Activated B cell treated with CpG ODN at 0.5 μM for 24 hours (primary cell): ENCODE measurements at regions of chr14 and their contacts with region 1.

Region 1: DNA sequence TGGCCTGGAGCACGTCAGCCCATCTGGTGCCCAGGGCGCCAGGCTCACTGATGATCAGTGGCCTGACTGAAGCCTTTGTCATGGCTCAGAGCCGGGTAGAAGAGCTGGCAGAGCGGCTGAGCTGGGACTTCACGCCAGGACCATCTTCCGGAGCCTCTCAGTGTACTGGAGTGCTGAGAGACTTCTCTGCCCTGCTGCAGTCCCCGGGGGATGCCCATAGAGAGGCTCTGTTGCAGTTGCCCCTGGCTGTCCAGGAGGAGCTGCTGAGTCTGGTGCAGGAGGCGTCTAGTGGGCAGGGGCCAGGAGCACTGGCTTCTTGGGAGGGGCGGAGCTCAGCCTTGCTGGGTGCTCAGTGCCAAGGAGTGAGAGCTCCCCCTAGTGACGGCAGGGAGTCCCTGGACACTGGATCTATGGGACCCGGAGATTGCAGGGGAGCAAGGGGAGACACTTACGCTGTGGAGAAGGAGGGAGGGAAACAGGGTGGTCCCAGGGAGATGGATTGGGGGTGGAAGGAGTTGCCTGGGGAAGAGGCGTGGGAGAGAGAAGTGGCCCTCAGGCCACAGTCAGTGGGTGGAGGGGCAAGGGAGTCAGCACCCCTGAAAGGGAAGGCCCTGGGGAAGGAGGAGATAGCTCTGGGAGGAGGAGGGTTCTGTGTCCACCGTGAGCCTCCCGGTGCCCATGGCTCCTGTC is 2.0 kb downstream of the KHNYN start:
- DNase-seq: peak; percentile 73
- ATAC-seq: peak; percentile 41
- H3K4me3 Mint-ChIP-seq: peak overlapping the region; percentile 93
- H3K27ac Mint-ChIP-seq: peak overlapping the region; percentile 97
- H3K4me1 Mint-ChIP-seq: peaks cover 53% of the 10 kb centered on the region
- H3K27me3 Mint-ChIP-seq: no peaks in the 10 kb centered on the region
- CTCF ChIP-seq: peak; percentile 49

Region 2: GRCh38 chr14:24013654-24014514 is 417.8 kb before region 1 on chr14:
- CTCF ChIA-PET with region 1: no interaction called
- POLR2A ChIA-PET with region 1: no interaction called
- intact Hi-C with region 1: loop called (anchors 1 kb)
- DNase-seq: no peak
- ATAC-seq: peak; percentile 97
- H3K4me3 Mint-ChIP-seq: no peak overlapping the region
- H3K27ac Mint-ChIP-seq: no peak overlapping the region
- H3K4me1 Mint-ChIP-seq: peaks cover 20% of the 10 kb centered on the region
- H3K27me3 Mint-ChIP-seq: no peaks in the 10 kb centered on the region
- CTCF ChIP-seq: peak; percentile 48

Region 3: DNA sequence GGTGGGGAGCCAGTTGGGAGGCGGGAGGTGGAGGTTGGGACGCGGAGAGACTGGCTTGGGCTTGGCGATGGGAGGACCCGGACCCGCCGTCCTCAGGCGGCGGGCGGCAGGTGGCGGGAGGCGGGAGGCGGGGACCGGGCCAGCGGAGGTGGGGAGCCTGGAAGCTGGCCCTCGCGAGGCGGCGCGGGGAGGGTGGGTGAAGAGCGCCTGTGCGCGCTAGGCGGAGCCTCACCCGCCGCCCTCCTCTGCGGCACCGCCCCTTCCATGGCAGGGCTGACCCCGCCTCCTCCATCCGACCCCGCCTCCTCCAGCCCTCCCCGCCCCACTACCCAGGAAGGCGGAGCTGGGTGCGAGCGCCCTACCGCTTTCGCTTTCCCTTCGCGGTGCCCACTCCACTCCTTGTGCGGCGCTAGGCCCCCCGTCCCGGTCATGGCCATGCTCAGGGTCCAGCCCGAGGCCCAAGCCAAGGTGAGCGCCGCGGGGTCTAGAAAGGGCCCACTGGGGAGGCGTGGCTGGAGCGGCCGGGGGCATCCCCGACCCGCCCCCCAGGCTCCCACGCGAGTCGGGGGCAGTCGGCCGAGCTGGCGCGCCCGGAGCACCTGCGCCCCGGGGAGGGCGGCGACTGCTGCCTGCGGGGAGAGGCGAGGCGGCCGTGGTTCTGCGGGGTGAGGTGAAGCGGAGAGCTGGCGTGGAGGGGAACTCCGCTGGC is 295.7 kb before region 1 on chr14 and contains the start of gene PSME1:
- CTCF ChIA-PET with region 1: no interaction called
- POLR2A ChIA-PET with region 1: interaction called, 5 read pairs
- intact Hi-C with region 1: loop called (anchors 1 kb)
- DNase-seq: peak; percentile 94
- ATAC-seq: peak; percentile 97
- H3K4me3 Mint-ChIP-seq: peak within 1 kb of the TSS; percentile 91
- H3K27ac Mint-ChIP-seq: peak within 1 kb of the TSS; percentile 90
- H3K4me1 Mint-ChIP-seq: peaks cover 57% of the 10 kb centered on the region
- H3K27me3 Mint-ChIP-seq: no peaks in the 10 kb centered on the region
- CTCF ChIP-seq: no peak
- total RNA-seq, gene PSME1: 406 and 449 TPM in 2 replicates

Region 4: GRCh38 chr14:24215495-24216344 is 216.0 kb before region 1 on chr14 and contains the start of gene MDP1:
- CTCF ChIA-PET with region 1: interaction called, 5 read pairs
- POLR2A ChIA-PET with region 1: interaction called, 25 read pairs
- intact Hi-C with region 1: loop called (anchors 1 kb)
- DNase-seq: peak; percentile 71
- ATAC-seq: peak; percentile 75
- H3K4me3 Mint-ChIP-seq: peak within 1 kb of the TSS; percentile 93
- H3K27ac Mint-ChIP-seq: peak within 1 kb of the TSS; percentile 95
- H3K4me1 Mint-ChIP-seq: peaks cover 50% of the 10 kb centered on the region
- H3K27me3 Mint-ChIP-seq: no peaks in the 10 kb centered on the region
- CTCF ChIP-seq: no peak
- total RNA-seq, gene MDP1: 12.7 and 16.3 TPM in 2 replicates

Region 5: GRCh38 chr14:24299255-24300195 is 132.2 kb before region 1 on chr14 and contains the starts of genes DHRS1 and NOP9:
- CTCF ChIA-PET with region 1: interaction called, 5 read pairs
- POLR2A ChIA-PET with region 1: interaction called, 28 read pairs
- intact Hi-C with region 1: loop called (anchors 1 kb)
- DNase-seq: peak; percentile 93
- ATAC-seq: peak; percentile 78
- H3K4me3 Mint-ChIP-seq: peak within 1 kb of the TSS; percentile 95
- H3K27ac Mint-ChIP-seq: peak within 1 kb of the TSS; percentile 94
- H3K4me1 Mint-ChIP-seq: peaks cover 51% of the 10 kb centered on the region
- H3K27me3 Mint-ChIP-seq: no peaks in the 10 kb centered on the region
- CTCF ChIP-seq: no peak
- total RNA-seq, gene DHRS1: 32.5 and 33.9 TPM in 2 replicates
- total RNA-seq, gene NOP9: 30.5 and 36.4 TPM in 2 replicates

Region 6: DNA sequence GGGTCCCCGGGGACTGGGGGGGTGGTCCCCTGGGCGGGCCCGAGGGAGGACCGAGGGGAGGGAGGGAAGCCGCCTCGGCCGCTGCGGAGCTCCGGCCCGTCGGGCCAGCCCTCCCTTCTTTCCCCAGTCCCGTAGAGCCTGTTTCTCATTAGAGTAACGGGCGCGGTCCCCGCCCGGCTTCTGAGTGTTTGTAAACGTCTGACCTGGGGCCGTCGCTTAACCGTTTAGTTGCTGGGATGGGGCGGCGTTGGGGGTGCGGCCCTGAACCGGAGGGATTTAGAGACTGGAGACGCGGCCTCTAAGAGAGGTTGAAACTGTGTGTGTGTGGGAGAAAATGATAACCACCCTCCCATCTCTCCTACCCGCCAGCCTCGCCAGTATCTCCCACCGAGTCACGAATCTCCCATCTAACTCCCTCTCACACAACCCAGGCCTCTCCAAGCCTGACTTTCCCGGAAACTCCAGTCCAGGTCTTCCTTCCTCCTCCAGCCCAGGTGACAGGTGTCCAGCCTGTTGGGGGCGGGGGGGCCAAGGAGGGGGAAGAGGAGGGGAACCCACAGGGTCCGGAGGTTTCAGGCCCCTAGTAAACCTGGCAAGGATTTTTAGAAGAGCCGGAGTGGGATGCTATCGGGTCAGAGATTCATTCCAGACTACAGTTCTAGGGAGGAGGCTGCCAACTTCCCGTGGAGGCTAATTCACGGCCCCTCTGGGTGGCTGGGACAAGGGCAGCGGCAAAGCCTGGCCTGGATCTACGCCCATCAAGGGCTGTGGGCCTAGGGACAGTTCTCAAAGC is 64.8 kb before region 1 on chr14:
- CTCF ChIA-PET with region 1: interaction called, 108 read pairs
- POLR2A ChIA-PET with region 1: interaction called, 257 read pairs
- intact Hi-C with region 1: loop called (anchors 1 kb)
- DNase-seq: peak; percentile 100
- ATAC-seq: peak; percentile 83
- H3K4me3 Mint-ChIP-seq: peak overlapping the region; percentile 85
- H3K27ac Mint-ChIP-seq: peak overlapping the region; percentile 80
- H3K4me1 Mint-ChIP-seq: peaks cover 33% of the 10 kb centered on the region
- H3K27me3 Mint-ChIP-seq: peaks cover 5% of the 10 kb centered on the region
- CTCF ChIP-seq: no peak

Region 7: DNA sequence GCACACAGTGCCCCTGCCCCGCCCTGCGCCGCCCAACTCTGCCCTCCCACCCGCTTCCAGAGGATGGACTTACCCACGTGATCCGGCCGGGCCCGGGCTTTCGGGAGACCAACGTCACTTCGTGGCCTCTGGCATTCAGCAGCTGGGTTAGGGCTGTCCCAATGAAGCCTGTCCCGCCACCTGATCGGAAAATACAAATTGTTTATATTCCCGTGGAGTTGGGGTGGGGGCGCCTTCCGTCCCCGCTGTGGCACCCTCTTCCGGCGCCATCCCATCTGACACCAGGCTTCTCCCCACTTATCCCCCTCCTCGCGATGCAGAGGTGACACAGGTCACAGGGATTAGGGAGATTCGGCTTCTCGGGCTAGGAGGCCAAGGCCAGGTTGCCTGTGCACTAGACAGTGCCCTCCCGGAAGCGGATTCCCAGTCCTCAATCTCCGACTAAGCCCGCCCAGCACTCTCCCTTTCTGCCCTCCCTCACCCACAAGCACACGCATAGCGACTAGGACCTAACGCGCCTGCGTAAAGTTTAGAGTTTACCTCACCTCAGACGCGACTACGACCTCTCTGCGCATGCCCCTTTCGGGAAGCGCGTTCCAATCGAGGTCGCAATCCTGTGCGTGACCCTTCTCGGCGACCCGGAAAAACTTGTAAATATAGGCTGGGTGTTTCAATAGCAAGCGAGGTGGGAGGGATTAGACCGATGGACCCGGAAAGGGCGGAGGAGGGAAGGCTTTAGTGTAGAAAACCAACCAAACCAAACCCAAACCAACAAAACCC is 10.7 kb after region 1 on chr14 and contains the start of gene SDR39U1:
- CTCF ChIA-PET with region 1: interaction called, 38 read pairs
- POLR2A ChIA-PET with region 1: interaction called, 87 read pairs
- intact Hi-C with region 1: loop called (anchors 1 kb)
- DNase-seq: peak; percentile 81
- ATAC-seq: peak; percentile 89
- H3K4me3 Mint-ChIP-seq: peak within 1 kb of the TSS; percentile 98
- H3K27ac Mint-ChIP-seq: peak within 1 kb of the TSS; percentile 98
- H3K4me1 Mint-ChIP-seq: peaks cover 48% of the 10 kb centered on the region
- H3K27me3 Mint-ChIP-seq: no peaks in the 10 kb centered on the region
- CTCF ChIP-seq: no peak
- total RNA-seq, gene SDR39U1: 70.6 and 80.0 TPM in 2 replicates